Right cardiac atrium (tissue), 5 donors: ENCODE measurements at regions of chr7 and their contacts with region 1.

Region 1: DNA sequence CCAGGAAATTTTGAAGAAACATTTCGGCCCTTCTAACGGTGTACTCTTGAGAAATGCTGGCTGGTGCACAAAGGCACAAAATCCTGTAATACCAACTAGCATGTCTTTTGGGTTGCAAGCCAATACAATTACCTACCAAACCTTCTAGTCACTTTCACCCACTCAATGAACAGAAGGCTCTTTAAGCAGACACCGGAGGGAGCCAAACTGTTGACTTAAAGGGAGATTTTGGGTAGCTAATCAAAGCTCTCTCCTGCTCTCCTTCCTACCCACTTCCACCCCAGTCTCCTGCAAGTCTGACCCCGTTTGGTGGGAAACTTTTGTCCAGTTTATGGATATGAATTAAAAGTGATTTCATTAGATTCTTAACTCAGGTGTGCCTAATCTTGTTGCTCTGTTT is 24.0 kb downstream of the GRM3 start:
- DNase-seq: no peak
- ATAC-seq: no peak
- H3K4me3 ChIP-seq: no peak overlapping the region
- H3K27ac ChIP-seq: no peak overlapping the region
- H3K4me1 ChIP-seq: no peaks in the 10 kb centered on the region
- H3K27me3 ChIP-seq: no peaks in the 10 kb centered on the region

Region 2: GRCh38 chr7:85600395-85600794 is 1067.3 kb before region 1 on chr7:
- intact Hi-C with region 1: no loop called
- DNase-seq: no peak
- ATAC-seq: no peak
- H3K4me3 ChIP-seq: no peak overlapping the region
- H3K27ac ChIP-seq: no peak overlapping the region
- H3K4me1 ChIP-seq: no peaks in the 10 kb centered on the region
- H3K27me3 ChIP-seq: no peaks in the 10 kb centered on the region

Region 3: GRCh38 chr7:86558680-86559501 is 108.8 kb before region 1 on chr7:
- intact Hi-C with region 1: no loop called
- DNase-seq: no peak
- ATAC-seq: no peak
- H3K4me3 ChIP-seq: no peak overlapping the region
- H3K27ac ChIP-seq: no peak overlapping the region
- H3K4me1 ChIP-seq: no peaks in the 10 kb centered on the region
- H3K27me3 ChIP-seq: no peaks in the 10 kb centered on the region

Region 4: GRCh38 chr7:86814661-86815379 is 147.1 kb after region 1 on chr7:
- intact Hi-C with region 1: loop called in 2 of 4 experiments (anchors 5 kb)
- DNase-seq: no peak
- ATAC-seq: no peak
- H3K4me3 ChIP-seq: no peak overlapping the region
- H3K27ac ChIP-seq: no peak overlapping the region
- H3K4me1 ChIP-seq: no peaks in the 10 kb centered on the region
- H3K27me3 ChIP-seq: no peaks in the 10 kb centered on the region